Posterior vena cava (tissue), 2 donors: ENCODE measurements at regions of chr2 and their contacts with region 1.

Region 1: DNA sequence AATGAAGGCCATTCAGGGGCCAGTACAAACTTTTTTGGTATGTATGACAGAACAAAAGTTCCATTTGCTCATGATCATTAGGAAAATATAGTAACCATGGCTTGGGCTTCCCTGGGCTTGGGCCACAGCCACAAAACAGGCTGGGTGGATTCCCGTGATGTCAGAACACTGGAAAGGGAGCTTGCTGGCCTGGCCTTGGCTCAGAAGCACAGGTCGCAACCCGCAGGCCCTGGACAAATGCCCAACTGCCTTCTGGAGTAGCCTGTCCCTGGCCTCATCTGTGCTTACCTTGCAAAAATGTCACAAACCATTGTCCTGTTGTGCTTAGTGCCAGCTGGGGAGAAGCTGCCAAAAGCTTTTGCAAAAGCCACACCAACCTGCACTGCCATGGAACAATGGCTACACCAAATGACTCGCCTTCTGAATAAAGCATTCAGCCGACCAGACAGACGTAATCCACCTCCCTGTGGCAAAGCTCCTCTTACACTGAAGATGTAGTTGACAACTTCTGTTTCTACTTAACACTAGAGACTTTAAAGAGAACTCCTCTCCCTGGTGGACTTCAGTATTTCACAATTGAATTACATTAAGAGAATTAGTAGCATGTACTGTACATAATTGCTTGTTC is 125.5 kb downstream of the ANKRD44 start:
- DNase-seq: peak; percentile 93

Region 2: GRCh38 chr2:197113275-197113711 is 71.8 kb before region 1 on chr2:
- intact Hi-C with region 1: loop called in 1 of 2 experiments (anchors 5 kb)
- DNase-seq: no peak

Region 3: GRCh38 chr2:197124639-197125390 is 60.3 kb before region 1 on chr2:
- intact Hi-C with region 1: loop called in 1 of 2 experiments (anchors 10 kb)
- DNase-seq: no peak

Region 4: DNA sequence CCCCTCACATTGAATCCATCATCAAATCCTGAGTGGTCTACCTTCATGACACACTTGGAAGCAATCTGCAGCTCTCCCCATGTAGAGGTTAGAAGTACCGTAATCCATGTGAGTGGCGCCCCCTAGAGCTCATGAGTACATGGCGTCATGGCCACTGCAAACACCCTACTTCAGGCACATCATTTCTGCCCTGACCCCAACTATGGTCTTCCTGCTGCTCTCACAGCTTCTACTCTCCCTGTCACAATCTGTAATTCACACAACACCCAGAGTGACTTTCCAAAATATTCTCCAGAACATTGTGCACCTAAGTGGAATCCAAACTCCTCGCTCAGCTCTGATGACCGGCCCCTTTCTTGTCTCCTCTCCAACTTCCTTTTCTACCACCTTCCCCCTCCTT is 16.4 kb before region 1 on chr2:
- intact Hi-C with region 1: no loop called
- DNase-seq: peak; percentile 80